Left lung (tissue), 14 donors: ENCODE measurements at regions of chr5 and their contacts with region 1.

Region 1: GRCh38 chr5:172984243-172984953 is 827 bp downstream of the ATP6V0E1 start:
- DNase-seq: peak; percentile 66 to 86 (median 76)
- ATAC-seq: peak; percentile 78
- H3K4me3 ChIP-seq: peak overlapping the region; percentile 89 to 93
- H3K27ac ChIP-seq: peak overlapping the region; percentile 95 to 97
- H3K4me1 ChIP-seq: peaks cover 10 to 48% of the 10 kb centered on the region in 2 donors
- H3K27me3 ChIP-seq: no peaks in the 10 kb centered on the region
- CTCF ChIP-seq: peak; percentile 16 to 47

Region 2: GRCh38 chr5:172235132-172235780 is 749.1 kb before region 1 on chr5:
- intact Hi-C with region 1: no loop called
- DNase-seq: no peak
- ATAC-seq: peak; percentile 66
- H3K4me3 ChIP-seq: no peak overlapping the region
- H3K27ac ChIP-seq: no peak overlapping the region
- H3K4me1 ChIP-seq: peaks cover 9 to 17% of the 10 kb centered on the region in 2 donors
- H3K27me3 ChIP-seq: no peaks in the 10 kb centered on the region
- CTCF ChIP-seq: no peak

Region 3: GRCh38 chr5:172707285-172708182 is 276.9 kb before region 1 on chr5:
- intact Hi-C with region 1: no loop called
- DNase-seq: peak in 1 of 4 donors; percentile 75
- ATAC-seq: peak; percentile 77
- H3K4me3 ChIP-seq: no peak overlapping the region
- H3K27ac ChIP-seq: no peak overlapping the region
- H3K4me1 ChIP-seq: no peaks in the 10 kb centered on the region
- H3K27me3 ChIP-seq: peaks cover 0 to 5% of the 10 kb centered on the region in 2 donors
- CTCF ChIP-seq: peak; percentile 16 to 17

Region 4: DNA sequence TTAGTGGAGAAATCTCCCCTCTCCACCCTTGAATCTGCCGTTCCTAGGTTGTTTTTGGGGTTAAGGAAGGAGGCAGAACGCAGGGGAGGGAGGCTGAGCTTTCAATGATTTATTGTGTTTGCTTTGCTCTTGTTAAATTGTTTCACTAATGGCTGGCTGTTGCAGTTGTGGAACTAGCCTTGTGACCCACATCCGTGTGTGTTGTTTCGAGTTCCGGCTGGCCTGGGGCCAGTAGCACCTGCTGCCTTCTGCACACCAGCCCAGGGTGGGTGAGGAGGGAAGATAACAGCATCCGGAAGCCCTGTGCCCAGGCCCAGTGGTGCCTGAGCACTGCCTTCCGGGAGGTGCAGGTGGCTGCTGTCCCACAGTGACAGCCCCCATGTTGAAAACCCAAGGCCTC is 146.8 kb before region 1 on chr5:
- intact Hi-C with region 1: no loop called
- DNase-seq: peak in 3 of 4 donors; percentile 84 to 91 (median 86)
- ATAC-seq: peak; percentile 71
- H3K4me3 ChIP-seq: peak overlapping the region in 1 of 2 donors; percentile 14
- H3K27ac ChIP-seq: peak overlapping the region; percentile 78 to 86
- H3K4me1 ChIP-seq: peaks cover 20 to 77% of the 10 kb centered on the region in 2 donors
- H3K27me3 ChIP-seq: no peaks in the 10 kb centered on the region
- CTCF ChIP-seq: no peak

Region 5: GRCh38 chr5:173144200-173145176 is 160.1 kb after region 1 on chr5 and contains the start of gene BNIP1:
- intact Hi-C with region 1: loop called in 1 of 2 experiments (anchors 10 kb)
- DNase-seq: peak; percentile 95 to 98 (median 96)
- ATAC-seq: peak; percentile 99
- H3K4me3 ChIP-seq: peak within 1 kb of the TSS; percentile 91 to 92
- H3K27ac ChIP-seq: peak within 1 kb of the TSS; percentile 85 to 91
- H3K4me1 ChIP-seq: peaks cover 0 to 16% of the 10 kb centered on the region in 2 donors
- H3K27me3 ChIP-seq: no peaks in the 10 kb centered on the region
- CTCF ChIP-seq: peak; percentile 80 to 89
- polyA plus RNA-seq, gene BNIP1: 12.5 to 14.3 (median 13.4) TPM

Region 6: GRCh38 chr5:173204185-173204979 is 220.0 kb after region 1 on chr5:
- intact Hi-C with region 1: loop called in 1 of 2 experiments (anchors 5 kb)
- DNase-seq: no peak
- ATAC-seq: peak; percentile 35
- H3K4me3 ChIP-seq: no peak overlapping the region
- H3K27ac ChIP-seq: no peak overlapping the region
- H3K4me1 ChIP-seq: no peaks in the 10 kb centered on the region
- H3K27me3 ChIP-seq: peaks cover 5 to 56% of the 10 kb centered on the region in 2 donors
- CTCF ChIP-seq: peak; percentile 36 to 38